Mammary epithelial cell (primary cell): ENCODE measurements at regions of chr14 and their contacts with region 1.

Region 1: GRCh38 chr14:64702493-64703394 is 1.5 kb upstream of the PLEKHG3 start:
- DNase-seq: peak; percentile 83
- H3K4me3 ChIP-seq: peak overlapping the region; percentile 82 to 92 (median 91)
- H3K27ac ChIP-seq: peak overlapping the region; percentile 80
- H3K4me1 ChIP-seq: peaks cover 44% of the 10 kb centered on the region
- H3K27me3 ChIP-seq: no peaks in the 10 kb centered on the region
- CTCF ChIP-seq: no peak

Region 2: GRCh38 chr14:64726585-64726890 is 23.8 kb after region 1 on chr14:
- CTCF ChIA-PET with region 1: no interaction called
- dilution Hi-C with region 1: no loop called
- in situ Hi-C with region 1: no loop called
- intact Hi-C with region 1: loop called (anchors 1 kb)
- DNase-seq: peak; percentile 99
- H3K4me3 ChIP-seq: no peak overlapping the region
- H3K27ac ChIP-seq: peak overlapping the region; percentile 89
- H3K4me1 ChIP-seq: peaks cover 61% of the 10 kb centered on the region
- H3K27me3 ChIP-seq: no peaks in the 10 kb centered on the region
- CTCF ChIP-seq: no peak

Region 3: GRCh38 chr14:64758691-64759584 is 56.2 kb after region 1 on chr14:
- CTCF ChIA-PET with region 1: no interaction called
- dilution Hi-C with region 1: no loop called
- in situ Hi-C with region 1: no loop called
- intact Hi-C with region 1: loop called (anchors 1 kb)
- DNase-seq: peak; percentile 82
- H3K4me3 ChIP-seq: no peak overlapping the region
- H3K27ac ChIP-seq: peak overlapping the region; percentile 68
- H3K4me1 ChIP-seq: peaks cover 78% of the 10 kb centered on the region
- H3K27me3 ChIP-seq: no peaks in the 10 kb centered on the region
- CTCF ChIP-seq: no peak

Region 4: DNA sequence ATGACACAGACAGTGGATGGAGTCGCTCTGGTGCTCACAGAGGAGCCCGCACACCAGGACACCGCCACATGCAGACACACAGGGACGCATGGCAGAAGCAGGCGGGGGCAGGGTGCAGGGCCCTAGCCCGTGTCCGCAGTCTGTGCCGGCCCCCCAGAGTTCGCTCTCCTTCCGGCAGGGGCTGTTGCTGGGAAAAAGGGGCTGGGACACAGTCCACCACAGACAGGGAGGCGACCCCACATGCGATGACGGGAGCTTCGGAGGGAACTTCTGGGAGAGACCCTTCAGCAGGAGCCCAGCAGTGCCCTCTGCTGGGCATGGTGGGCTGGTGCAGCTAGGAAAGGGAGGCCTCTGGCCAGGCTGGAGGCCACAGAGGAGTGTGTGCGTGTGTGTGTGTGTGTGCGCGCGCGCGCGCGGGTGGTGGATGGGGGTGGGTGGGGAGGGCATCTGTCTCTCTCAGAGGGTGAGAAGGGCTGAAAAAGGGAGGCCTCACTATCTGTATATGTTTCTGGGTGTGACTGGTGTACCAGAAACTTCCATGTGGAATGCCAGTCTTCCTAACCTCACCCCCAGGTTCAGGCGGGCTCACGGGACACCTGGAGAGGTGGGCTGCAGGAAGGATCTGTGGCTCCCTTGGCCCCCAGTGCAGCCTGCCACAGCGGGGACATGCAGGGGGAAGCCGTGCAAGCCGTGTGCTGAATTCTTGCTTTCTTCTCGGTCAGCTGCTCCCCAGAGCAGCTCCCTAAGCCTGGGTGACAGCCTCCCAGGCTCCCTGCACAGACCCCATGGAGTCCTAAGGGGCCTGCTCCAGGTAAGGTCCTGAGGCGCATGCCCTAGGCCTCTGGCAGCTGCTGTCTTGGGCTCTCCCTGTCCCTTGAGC is 62.1 kb after region 1 on chr14:
- CTCF ChIA-PET with region 1: no interaction called
- dilution Hi-C with region 1: no loop called
- in situ Hi-C with region 1: no loop called
- intact Hi-C with region 1: loop called (anchors 1 kb)
- DNase-seq: peak; percentile 61
- H3K4me3 ChIP-seq: no peak overlapping the region
- H3K27ac ChIP-seq: no peak overlapping the region
- H3K4me1 ChIP-seq: peaks cover 45% of the 10 kb centered on the region
- H3K27me3 ChIP-seq: no peaks in the 10 kb centered on the region
- CTCF ChIP-seq: peak; percentile 80 to 92

Region 5: DNA sequence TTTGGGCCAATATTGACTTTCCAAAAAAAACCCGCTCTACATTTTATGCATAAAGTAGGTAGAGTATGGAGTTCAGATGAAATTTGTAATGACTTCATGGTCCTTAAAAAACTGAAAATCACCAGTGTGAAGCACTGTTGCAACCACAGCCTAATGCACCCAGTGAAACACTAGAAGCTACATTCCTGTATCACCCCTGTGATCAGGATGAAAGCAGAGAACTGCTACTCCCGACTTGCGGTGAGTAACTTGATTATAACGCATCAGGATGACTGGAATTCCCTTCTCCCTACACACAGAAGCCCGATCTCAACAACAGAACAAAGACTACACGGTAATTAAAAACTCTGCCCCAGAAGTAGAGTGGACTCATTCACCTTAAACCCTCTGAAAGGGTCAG is 143.1 kb after region 1 on chr14:
- CTCF ChIA-PET with region 1: no interaction called
- dilution Hi-C with region 1: no loop called
- in situ Hi-C with region 1: no loop called
- intact Hi-C with region 1: no loop called
- DNase-seq: no peak
- H3K4me3 ChIP-seq: no peak overlapping the region
- H3K27ac ChIP-seq: no peak overlapping the region
- H3K4me1 ChIP-seq: no peaks in the 10 kb centered on the region
- H3K27me3 ChIP-seq: peaks cover 9% of the 10 kb centered on the region
- CTCF ChIP-seq: no peak